Cardiac septum (tissue), 1 donor: ENCODE measurements at regions of chr1 and their contacts with region 1.

Region 1: DNA sequence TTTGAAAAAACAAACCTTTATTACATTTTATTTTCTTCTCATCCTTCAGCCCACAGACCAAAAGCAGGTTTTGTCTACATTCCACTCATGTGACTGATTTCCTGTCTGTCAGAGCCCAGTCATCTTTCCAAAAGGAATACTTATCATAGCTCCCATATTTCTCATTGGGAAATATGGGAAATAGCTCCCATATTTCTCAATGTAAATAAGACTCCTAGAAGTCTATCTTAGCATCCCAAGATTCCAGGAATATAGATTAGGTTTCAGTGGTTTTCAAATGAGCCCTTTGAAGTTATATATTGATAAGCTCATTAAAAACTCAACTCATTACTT is 19.1 kb upstream of the NRDC start:
- DNase-seq: no peak

Region 2: DNA sequence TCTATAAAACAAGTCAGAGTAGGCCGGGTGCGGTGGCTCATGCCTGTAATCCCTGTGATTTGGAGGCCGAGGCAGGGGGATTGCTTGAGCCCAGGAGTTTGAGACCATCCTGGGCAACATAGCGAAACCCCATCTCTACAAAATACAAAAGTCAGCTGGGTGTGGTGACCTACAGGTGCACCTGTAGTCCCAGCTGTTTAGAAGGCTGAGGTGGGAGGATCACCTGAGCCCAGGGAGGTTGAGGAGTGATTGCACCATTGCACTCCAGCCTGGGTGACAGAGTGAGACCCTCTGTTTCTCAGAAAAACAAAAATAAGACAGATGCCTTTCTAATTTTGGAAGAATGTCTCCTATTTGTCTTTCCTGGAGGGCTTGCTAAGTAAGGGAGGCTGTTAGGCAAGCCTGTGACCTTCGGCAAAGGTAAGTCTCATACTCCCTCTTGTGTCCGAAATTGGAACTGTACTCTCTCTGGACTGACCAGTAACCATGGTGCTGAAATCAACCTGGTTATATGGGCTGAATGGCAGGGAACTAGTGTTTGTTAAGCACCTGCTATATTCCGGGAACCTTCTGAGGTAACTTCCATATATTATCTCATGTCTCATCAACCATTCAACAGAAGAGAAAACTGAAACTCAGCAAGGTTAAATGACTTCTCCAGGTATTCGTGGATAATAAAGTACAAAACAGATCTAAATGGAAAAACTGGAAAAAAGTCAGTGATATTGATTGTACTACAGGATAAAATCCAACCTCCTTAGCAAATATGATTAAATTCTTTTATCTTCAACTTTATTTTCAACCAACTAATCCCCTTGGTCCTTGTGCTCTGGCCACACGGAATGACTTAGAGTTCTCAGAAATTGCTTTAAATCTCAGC is 104.6 kb after region 1 on chr1:
- intact Hi-C with region 1: loop called (anchors 2 kb)
- DNase-seq: no peak